ENCODE measurements at regions of chr22 and their contacts with region 1.

Region 1: GRCh38 chr22:20562461-20563247 is 55.2 kb downstream of the MED15 start:
- DNase-seq: no peak
- H3K4me3 Mint-ChIP-seq: no peak overlapping the region
- H3K27ac Mint-ChIP-seq: peak overlapping the region; percentile 68
- H3K4me1 Mint-ChIP-seq: peaks cover 65% of the 10 kb centered on the region
- H3K27me3 Mint-ChIP-seq: no peaks in the 10 kb centered on the region

Region 2: GRCh38 chr22:20437613-20438426 is 124.8 kb before region 1 on chr22 and contains the start of gene SCARF2:
- intact Hi-C with region 1: no loop called
- DNase-seq: no peak
- H3K4me3 Mint-ChIP-seq: peak within 1 kb of the TSS; percentile 56
- H3K27ac Mint-ChIP-seq: no peak within 1 kb of the TSS
- H3K4me1 Mint-ChIP-seq: peaks cover 5% of the 10 kb centered on the region
- H3K27me3 Mint-ChIP-seq: peaks cover 48% of the 10 kb centered on the region
- total RNA-seq, gene SCARF2: 0.24 and 0.41 TPM in 2 replicates

Region 3: DNA sequence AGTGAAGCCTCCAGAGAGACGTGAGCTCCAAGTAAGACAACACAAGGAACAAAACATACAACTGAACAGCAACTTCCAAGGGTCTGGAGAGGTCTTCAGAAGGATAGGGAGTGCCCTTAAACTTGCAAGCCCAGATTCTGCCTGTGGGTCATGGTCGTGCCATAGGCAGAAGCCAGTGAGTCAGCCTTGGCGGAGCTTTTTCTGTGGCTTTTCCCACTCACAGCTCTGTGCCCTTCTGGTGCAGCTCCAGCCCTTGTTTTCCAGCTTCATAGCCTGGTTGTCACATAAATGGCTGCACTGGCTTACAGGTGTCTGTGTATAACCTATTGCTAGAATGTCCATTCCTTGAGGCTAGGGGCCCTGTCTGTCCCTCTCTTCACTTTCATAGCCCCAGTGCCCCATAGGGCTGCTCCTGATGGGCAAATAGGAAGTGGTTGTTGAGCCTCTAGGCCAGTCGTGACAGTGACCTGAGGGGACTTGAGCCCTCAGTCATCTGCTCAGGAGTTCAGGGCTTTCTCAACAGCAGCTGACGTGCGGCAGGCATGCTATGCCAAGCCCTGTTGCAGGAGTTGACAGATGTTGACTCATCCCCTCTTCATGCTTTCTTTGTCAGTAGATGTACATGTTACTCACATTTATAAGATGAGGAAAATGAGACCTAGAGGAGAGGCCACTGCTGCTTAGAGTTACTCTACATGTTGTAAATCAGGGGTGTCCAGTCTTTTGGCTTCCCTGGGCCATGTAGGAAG is 47.8 kb before region 1 on chr22:
- intact Hi-C with region 1: no loop called
- DNase-seq: no peak
- H3K4me3 Mint-ChIP-seq: no peak overlapping the region
- H3K27ac Mint-ChIP-seq: no peak overlapping the region
- H3K4me1 Mint-ChIP-seq: peaks cover 53% of the 10 kb centered on the region
- H3K27me3 Mint-ChIP-seq: no peaks in the 10 kb centered on the region

Region 4: GRCh38 chr22:20624161-20624616 is 61.5 kb after region 1 on chr22:
- intact Hi-C with region 1: loop called (anchors 2 kb)
- DNase-seq: peak; percentile 18
- H3K4me3 Mint-ChIP-seq: no peak overlapping the region
- H3K27ac Mint-ChIP-seq: peak overlapping the region; percentile 6
- H3K4me1 Mint-ChIP-seq: peaks cover 14% of the 10 kb centered on the region
- H3K27me3 Mint-ChIP-seq: peaks cover 14% of the 10 kb centered on the region

Measured in activated T-helper 1 cell treated with anti-CD3 and anti-CD28 coated beads, Interleukin-12 subunit alpha, Interleukin-12 subunit beta, Interleukin-2, Interleukin-4 antibody, amounts not matched to agents 30 ng/mL and 10 ng/mL and 1 ng/mL, durations not matched to agents 14 hours and 24 hours and 36 hours (primary cell).